Activated naive CD4-positive, alpha-beta T cell treated with anti-CD3 and anti-CD28 coated beads, Interleukin-2, amount 10 ng/mL, durations not matched to agents 7 days and 5 days (primary cell): ENCODE measurements at regions of chr3 and their contacts with region 1.

Region 1: DNA sequence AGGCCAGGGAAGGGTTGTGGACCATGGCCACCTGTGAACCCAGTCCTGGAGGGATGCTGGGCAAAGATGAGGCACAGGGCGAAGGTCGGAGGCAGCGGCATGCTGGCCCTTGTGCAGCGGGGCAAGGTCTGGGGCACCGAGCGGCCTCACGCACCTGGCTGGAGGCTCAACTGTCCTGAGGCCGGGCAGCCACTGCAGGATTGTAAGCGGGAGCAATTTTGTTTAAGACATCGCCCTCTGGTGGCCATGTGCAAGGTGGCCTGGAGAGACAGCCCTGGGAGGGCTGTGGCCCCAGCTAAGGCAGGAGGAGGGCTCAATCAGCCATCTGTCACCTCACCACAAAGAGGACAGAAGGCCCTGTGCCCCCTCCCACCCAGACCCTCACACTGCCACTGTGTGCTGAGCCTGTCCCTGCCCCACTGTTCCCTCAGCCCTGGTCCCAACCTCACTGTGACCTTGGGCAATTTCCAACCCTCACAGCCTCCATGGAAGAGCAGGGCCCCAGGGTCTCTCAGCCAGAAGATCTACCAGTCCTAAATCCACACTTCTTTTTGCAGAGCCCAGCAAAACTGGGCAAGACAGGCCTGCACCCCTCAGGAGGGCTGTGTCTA is 46.2 kb downstream of the TPRA1 start:
- DNase-seq: peak; percentile 80
- H3K4me3 Mint-ChIP-seq: no peak overlapping the region
- H3K27ac Mint-ChIP-seq: no peak overlapping the region
- H3K4me1 Mint-ChIP-seq: peaks cover 10% of the 10 kb centered on the region
- H3K27me3 Mint-ChIP-seq: peaks cover 45% of the 10 kb centered on the region

Region 2: GRCh38 chr3:127374086-127375010 is 169.9 kb before region 1 on chr3:
- CTCF ChIA-PET with region 1: interaction called, 17 read pairs
- DNase-seq: peak; percentile 32
- H3K4me3 Mint-ChIP-seq: no peak overlapping the region
- H3K27ac Mint-ChIP-seq: no peak overlapping the region
- H3K4me1 Mint-ChIP-seq: no peaks in the 10 kb centered on the region
- H3K27me3 Mint-ChIP-seq: peaks cover 6% of the 10 kb centered on the region